Activated naive CD4-positive, alpha-beta T cell treated with anti-CD3 and anti-CD28 coated beads, Interleukin-2, amount 10 ng/mL, durations not matched to agents 7 days and 5 days (primary cell): ENCODE measurements at regions of chr15 and their contacts with region 1.

Region 1: GRCh38 chr15:66851226-66852071 is 149.4 kb downstream of the SMAD6 start:
- DNase-seq: peak; percentile 83
- H3K4me3 Mint-ChIP-seq: no peak overlapping the region
- H3K27ac Mint-ChIP-seq: no peak overlapping the region
- H3K4me1 Mint-ChIP-seq: peaks cover 7% of the 10 kb centered on the region
- H3K27me3 Mint-ChIP-seq: peaks cover 61% of the 10 kb centered on the region

Region 2: DNA sequence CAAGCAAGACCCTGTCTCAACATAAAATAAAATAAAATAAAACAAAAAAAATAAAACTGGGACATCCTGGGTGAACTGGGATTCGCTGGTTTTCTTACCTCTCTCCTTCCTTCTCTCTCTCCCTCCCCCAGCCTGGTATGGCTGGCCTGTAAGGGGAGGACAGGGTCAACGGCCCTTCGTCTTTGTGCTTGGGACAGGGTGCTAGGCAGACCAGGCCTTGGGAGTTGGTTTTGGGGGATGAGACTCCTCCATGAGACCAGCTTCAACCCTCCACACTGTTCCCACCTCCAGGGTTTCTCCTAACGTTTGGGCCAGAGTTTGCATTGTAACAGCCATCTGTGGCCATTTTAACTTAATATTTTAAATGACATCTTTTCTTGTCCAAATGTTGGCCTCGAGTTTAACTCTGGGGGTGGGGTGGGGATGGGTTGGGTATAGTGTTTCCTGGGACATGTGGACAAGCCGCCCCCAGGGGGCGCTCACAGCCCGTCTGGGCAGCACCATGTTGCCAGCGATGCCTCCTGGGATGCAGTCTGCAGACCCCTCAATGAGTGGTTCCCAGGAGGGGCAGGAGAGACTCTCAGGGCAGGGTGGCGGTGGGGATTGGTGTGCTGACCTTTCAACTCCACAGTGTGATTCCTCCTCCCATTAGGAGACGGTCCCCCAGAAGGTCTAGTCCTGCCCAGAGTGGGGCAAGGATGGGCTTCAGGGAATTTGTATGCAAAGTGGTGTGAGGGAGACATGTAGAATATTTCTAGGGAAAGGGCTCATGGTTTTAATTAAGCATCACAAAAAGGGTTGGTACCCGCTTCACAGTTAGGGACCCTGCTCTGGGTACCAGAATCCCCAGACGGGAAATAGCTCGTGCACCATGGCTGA is 247.9 kb before region 1 on chr15:
- CTCF ChIA-PET with region 1: interaction called, 92 read pairs
- DNase-seq: peak; percentile 77
- H3K4me3 Mint-ChIP-seq: no peak overlapping the region
- H3K27ac Mint-ChIP-seq: no peak overlapping the region
- H3K4me1 Mint-ChIP-seq: peaks cover under 1% of the 10 kb centered on the region
- H3K27me3 Mint-ChIP-seq: peaks cover 41% of the 10 kb centered on the region

Region 3: DNA sequence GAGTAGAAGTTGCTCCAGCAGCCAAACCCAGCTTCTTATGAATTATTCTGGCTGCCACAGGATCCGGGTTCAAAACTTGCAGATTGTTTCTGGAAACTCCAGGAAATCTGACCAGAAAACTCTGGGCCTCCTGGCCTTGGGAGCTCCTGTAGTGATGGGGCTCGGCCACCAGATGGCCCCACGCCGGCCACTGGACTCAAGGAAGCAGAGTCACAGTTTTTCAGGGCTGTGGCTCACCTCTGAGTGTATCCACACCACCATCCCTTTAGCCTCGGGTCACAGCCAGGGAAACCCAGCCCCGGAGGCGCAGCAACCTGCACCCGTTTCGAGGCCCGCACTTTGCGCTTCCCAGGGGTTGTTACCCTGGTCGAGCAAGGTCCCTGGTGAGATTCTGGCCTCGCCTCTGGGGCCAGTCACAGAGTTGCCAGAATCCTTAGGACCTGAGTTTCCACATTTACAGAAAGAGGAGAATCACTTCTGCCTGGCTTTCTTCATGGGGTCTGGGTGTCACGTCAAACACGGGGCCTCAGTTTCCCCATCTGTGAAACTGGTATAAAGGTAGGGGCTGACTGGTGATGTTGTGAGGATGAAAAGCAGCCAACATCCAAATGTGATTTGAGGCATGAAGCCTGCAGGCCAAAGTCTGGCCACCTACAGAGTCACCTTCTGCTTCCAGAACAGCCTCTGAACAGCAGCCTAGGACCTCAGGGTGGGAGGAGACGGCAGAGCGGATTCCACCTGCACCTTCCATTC is 232.1 kb before region 1 on chr15:
- CTCF ChIA-PET with region 1: interaction called, 35 read pairs
- DNase-seq: peak; percentile 65
- H3K4me3 Mint-ChIP-seq: no peak overlapping the region
- H3K27ac Mint-ChIP-seq: no peak overlapping the region
- H3K4me1 Mint-ChIP-seq: peaks cover 12% of the 10 kb centered on the region
- H3K27me3 Mint-ChIP-seq: peaks cover 61% of the 10 kb centered on the region

Region 4: GRCh38 chr15:66765478-66766281 is 85.8 kb before region 1 on chr15:
- CTCF ChIA-PET with region 1: no interaction called
- DNase-seq: no peak
- H3K4me3 Mint-ChIP-seq: no peak overlapping the region
- H3K27ac Mint-ChIP-seq: no peak overlapping the region
- H3K4me1 Mint-ChIP-seq: peaks cover 14% of the 10 kb centered on the region
- H3K27me3 Mint-ChIP-seq: peaks cover 82% of the 10 kb centered on the region

Region 5: DNA sequence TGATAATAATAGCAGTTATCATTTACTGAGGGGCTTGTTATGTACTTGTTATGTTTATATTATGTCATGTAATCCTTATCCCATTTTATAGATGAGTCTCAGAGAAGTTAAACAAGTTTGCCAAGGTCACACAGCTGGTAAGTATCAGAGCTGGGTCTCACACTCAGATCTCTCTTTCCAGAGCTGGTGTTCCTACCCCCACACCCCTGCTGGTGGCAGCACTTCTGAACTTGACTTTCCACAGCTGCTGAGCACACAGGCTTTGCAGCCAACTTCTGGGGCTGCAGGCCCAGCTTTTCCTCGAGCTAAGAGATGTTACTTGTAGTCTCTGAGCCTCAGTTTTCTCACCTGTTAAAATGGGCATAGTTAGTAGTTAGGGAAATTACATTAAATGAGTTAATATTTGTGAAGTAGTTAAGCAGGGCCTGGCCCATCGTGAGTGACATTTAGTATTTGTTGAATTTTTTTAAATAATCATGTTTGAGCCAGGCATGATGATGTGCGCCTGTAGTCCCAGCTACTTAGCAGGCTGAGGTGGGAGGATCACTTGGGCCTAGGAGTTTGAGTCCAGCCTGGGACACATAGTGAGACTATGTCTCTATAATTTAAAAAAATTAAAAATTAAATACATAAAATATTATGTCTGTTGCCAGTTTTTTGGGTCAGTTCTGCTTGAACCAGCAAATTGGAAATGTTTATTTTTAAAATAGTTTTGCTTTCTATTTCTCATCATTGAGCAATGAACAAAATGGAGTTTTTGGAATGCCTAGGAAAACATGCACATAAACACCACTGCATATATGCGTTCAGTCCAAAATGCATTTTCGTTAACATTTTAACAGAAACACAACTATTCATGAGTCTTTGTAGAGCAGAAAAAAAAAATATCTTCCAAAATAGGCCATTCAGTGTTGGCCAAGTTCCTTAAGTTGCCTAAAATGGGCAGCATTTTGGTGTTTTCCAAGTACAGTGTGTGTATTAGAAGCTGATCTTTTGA is 62.1 kb before region 1 on chr15:
- CTCF ChIA-PET with region 1: interaction called, 12 read pairs
- DNase-seq: no peak
- H3K4me3 Mint-ChIP-seq: no peak overlapping the region
- H3K27ac Mint-ChIP-seq: no peak overlapping the region
- H3K4me1 Mint-ChIP-seq: no peaks in the 10 kb centered on the region
- H3K27me3 Mint-ChIP-seq: peaks cover 35% of the 10 kb centered on the region

Region 6: DNA sequence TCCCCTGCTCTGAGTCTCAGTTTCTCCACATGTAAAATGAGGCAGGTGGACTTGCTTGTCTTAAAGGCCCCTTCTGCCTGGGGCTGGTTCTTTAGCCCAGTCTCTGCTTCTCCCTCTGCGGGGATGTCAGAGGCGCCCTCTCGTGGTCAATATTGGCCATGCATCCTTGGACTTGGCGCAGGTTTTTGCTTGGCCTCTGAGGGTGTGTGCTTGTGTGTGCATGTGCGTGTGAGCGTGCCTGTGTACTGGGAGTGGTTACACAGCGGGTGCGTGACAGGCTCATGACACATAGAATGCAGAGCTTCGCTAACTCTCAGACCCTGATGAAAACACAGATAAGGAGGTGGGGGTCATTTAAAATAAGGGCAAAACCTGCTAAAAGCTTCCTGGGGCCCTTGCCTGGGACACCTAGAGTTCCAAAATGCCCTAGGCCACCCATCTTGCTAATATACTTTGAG is 11.5 kb after region 1 on chr15:
- CTCF ChIA-PET with region 1: interaction called, 45 read pairs
- DNase-seq: peak; percentile 85
- H3K4me3 Mint-ChIP-seq: no peak overlapping the region
- H3K27ac Mint-ChIP-seq: no peak overlapping the region
- H3K4me1 Mint-ChIP-seq: peaks cover 12% of the 10 kb centered on the region
- H3K27me3 Mint-ChIP-seq: peaks cover 53% of the 10 kb centered on the region

Region 7: GRCh38 chr15:66923438-66923881 is 72.0 kb after region 1 on chr15:
- CTCF ChIA-PET with region 1: no interaction called
- DNase-seq: peak; percentile 63
- H3K4me3 Mint-ChIP-seq: no peak overlapping the region
- H3K27ac Mint-ChIP-seq: no peak overlapping the region
- H3K4me1 Mint-ChIP-seq: peaks cover 20% of the 10 kb centered on the region
- H3K27me3 Mint-ChIP-seq: peaks cover 67% of the 10 kb centered on the region